ENCODE measurements at regions of chr19 and their contacts with region 1.

Region 1: GRCh38 chr19:49676690-49677231 is 310 bp upstream of the PRMT1 start:
- DNase-seq: peak; percentile 91 to 100 (median 98)
- ATAC-seq: peak; percentile 74 to 76
- H3K4me3 Mint-ChIP-seq: peak overlapping the region; percentile 89 to 100 (median 98)
- H3K27ac Mint-ChIP-seq: peak overlapping the region; percentile 84 to 100 (median 98)
- H3K4me1 Mint-ChIP-seq: peaks cover 32 to 55% (median 44%) of the 10 kb centered on the region in 4 donors
- H3K27me3 Mint-ChIP-seq: no peaks in the 10 kb centered on the region

Region 2: DNA sequence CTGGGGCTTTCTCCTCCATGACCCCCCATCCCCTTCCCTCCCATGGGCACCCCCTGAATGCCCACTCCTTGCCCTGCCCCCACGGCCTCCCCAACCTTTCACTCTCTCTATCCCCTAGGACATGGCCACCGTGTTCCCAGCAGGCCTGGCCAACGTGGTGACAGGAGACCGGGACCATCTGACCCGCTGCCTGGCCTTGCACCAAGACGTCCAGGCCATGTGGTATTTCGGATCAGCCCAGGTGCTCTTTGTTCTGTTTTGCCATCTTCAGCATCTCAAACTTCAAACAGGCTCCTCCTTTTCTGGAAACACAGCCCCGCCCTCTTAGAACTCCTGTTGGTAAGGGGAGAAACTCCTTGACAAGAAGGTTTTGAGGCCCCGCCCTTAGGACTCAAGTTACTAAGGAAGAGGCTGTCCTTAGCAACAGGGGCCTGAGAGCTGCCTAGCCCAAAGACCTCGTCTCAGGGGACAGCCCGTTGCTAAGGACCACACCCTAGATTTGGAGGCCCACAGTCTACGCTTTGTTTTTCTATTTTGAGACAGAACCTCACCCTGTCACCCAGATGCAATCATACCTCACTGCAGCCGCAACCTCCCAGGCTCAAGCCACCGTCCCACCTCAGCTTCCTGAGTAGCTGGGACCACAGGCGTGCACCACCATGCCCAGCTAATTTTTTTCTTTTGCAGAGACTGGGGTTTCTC is 207.9 kb before region 1 on chr19:
- POLR2A ChIA-PET with region 1: interaction called, 11 read pairs
- DNase-seq: peak; percentile 58 to 98 (median 92)
- ATAC-seq: peak; percentile 74 to 83
- H3K4me3 Mint-ChIP-seq: peak overlapping the region; percentile 52 to 98 (median 84)
- H3K27ac Mint-ChIP-seq: peak overlapping the region; percentile 98 to 100 (median 100)
- H3K4me1 Mint-ChIP-seq: peaks cover 14 to 59% (median 48%) of the 10 kb centered on the region in 4 donors
- H3K27me3 Mint-ChIP-seq: no peaks in the 10 kb centered on the region

Region 3: DNA sequence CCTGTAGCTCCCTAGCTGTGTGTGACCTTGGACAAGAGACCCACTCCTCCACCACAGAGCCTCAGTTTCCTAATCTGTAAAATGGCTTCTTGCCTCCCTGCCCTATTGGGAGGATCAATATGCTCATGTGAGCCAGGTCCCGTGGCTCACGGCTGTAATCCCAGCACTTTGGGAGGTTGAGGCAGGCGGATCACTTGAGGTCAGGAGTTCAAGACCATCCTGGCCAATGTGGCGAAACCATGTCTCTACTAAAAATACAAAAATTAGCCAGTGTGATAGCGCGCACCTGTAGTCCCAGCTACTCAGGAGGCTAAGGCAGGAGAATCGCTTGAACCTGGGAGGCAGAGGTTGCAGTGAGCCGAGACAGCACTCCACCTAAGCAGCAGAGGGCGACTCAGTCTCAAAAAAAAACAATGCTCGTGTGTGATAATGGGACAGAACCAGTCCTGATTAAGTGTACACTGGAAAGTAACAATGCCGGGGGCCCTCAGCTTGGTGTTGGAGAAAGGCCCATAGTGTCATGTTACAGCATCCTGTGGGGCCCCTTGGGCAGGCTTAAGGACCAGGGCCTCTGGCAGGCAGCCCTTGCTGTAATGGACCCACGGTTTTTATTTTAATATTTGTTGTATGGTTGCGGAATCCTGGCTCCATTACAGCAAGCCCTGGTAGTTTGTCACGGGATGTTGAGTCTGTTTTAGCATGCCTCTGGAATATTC is 173.7 kb before region 1 on chr19:
- POLR2A ChIA-PET with region 1: interaction called, 15 read pairs
- DNase-seq: peak in 6 of 10 donors; percentile 43 to 75 (median 60)
- ATAC-seq: no peak
- H3K4me3 Mint-ChIP-seq: peak overlapping the region in 4 of 10 donors; percentile 18 to 34 (median 30)
- H3K27ac Mint-ChIP-seq: peak overlapping the region; percentile 96 to 100 (median 99)
- H3K4me1 Mint-ChIP-seq: peaks cover 15 to 58% (median 51%) of the 10 kb centered on the region in 4 donors
- H3K27me3 Mint-ChIP-seq: peaks cover 0 to 2% (median 0%) of the 10 kb centered on the region in 5 donors

Region 4: DNA sequence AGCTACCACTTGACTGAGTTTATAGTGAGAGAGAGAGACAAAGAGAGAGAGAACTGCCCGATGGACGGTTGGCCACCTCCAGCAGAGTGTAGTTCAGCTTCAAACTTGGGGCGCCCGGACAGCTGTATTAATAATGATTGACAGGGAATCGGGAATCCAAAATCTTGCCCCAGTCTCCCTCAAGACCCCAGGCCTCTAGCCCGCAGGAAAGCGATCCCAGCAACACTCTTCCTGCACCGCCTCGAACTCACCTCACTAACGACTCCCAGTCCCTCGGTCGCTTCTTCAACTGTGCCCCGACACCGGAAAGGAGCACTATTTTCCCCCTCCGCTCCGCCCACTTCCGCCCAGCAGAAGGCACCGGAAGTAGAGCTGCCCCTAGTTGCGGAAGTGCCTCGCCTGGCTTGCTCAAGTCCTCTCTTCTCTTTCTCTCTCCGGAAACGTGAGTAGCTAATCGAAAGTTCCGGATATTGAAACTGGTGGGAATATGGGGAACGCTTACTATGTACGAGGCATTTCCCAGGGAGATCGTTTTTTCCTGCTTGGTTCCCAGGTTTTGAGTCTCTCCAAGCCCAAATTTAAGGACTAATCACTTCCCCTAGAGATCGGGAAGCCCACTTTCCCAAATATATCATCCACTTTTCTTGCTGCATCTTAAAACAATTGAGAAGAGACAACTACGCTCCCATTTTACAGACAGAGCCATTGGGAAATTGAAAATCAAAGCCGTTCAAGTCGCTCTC is 96.3 kb before region 1 on chr19 and contains the start of gene NOSIP:
- POLR2A ChIA-PET with region 1: interaction called, 13 read pairs
- DNase-seq: peak; percentile 88 to 98 (median 96)
- ATAC-seq: peak; percentile 98 to 99
- H3K4me3 Mint-ChIP-seq: peak within 1 kb of the TSS; percentile 90 to 98 (median 94)
- H3K27ac Mint-ChIP-seq: peak within 1 kb of the TSS; percentile 89 to 97 (median 93)
- H3K4me1 Mint-ChIP-seq: peaks cover 14 to 44% (median 36%) of the 10 kb centered on the region in 4 donors
- H3K27me3 Mint-ChIP-seq: no peaks in the 10 kb centered on the region
- polyA plus RNA-seq, gene NOSIP: 662 to 854 (median 844) TPM

Region 5: GRCh38 chr19:49640113-49640898 is 36.5 kb before region 1 on chr19 and contains the start of gene RRAS:
- POLR2A ChIA-PET with region 1: interaction called, 63 read pairs
- DNase-seq: peak; percentile 94 to 100 (median 99)
- ATAC-seq: peak; percentile 67 to 73
- H3K4me3 Mint-ChIP-seq: peak within 1 kb of the TSS; percentile 87 to 98 (median 94)
- H3K27ac Mint-ChIP-seq: peak within 1 kb of the TSS; percentile 94 to 99 (median 97)
- H3K4me1 Mint-ChIP-seq: peaks cover 45 to 68% (median 58%) of the 10 kb centered on the region in 4 donors
- H3K27me3 Mint-ChIP-seq: no peaks in the 10 kb centered on the region
- polyA plus RNA-seq, gene RRAS: 21.8 to 30.2 (median 28.4) TPM

Region 6: DNA sequence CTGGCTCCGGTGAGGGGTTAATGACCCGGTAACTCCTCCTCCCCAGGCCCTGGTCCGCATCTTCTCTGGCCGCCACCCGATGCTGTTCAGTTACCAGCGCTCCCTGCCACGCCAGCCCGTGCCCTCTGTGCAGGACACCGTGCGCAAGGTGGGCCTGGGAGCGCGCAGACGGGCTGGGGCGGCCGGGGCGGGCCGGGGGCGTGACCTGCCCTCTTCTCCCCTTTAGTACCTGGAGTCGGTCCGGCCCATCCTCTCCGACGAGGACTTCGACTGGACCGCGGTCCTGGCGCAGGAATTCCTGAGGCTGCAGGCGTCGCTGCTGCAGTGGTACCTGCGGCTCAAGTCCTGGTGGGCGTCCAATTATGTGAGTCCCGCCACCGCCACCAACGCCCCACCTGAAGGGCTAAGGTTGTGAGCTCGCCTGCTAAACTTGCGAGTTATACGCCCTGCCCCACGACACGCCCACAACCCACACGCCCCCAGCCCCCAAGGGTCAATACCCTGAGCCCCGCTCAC is 24.6 kb after region 1 on chr19:
- POLR2A ChIA-PET with region 1: no interaction called
- DNase-seq: no peak
- ATAC-seq: no peak
- H3K4me3 Mint-ChIP-seq: no peak overlapping the region
- H3K27ac Mint-ChIP-seq: no peak overlapping the region
- H3K4me1 Mint-ChIP-seq: peaks cover 0 to 1% (median 0%) of the 10 kb centered on the region in 4 donors
- H3K27me3 Mint-ChIP-seq: peaks cover 0 to 35% (median 2%) of the 10 kb centered on the region in 5 donors

Region 7: GRCh38 chr19:49718511-49718910 is 41.8 kb after region 1 on chr19:
- POLR2A ChIA-PET with region 1: interaction called, 14 read pairs
- DNase-seq: no peak
- ATAC-seq: no peak
- H3K4me3 Mint-ChIP-seq: peak overlapping the region; percentile 52 to 97 (median 80)
- H3K27ac Mint-ChIP-seq: peak overlapping the region; percentile 60 to 100 (median 98)
- H3K4me1 Mint-ChIP-seq: peaks cover 6 to 32% (median 10%) of the 10 kb centered on the region in 4 donors
- H3K27me3 Mint-ChIP-seq: no peaks in the 10 kb centered on the region

Region 8: DNA sequence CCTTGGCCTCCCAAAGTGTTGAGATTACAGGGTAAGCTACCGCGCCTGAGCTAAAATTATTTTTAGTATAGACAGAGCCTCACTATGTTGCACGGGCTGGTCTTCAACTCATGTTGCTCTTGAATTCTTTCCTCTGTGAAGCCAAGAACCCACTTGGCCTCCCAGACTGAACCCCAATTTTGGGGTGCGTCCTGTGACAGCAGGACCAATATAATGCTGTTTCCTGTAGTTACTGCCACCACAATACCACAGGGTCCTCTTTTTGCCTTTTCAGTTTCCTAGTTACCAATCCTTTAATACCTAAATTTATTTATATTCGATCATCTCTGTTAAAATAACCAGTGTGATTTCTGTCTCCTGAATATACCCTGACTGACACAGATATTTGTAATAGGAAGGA is 53.4 kb after region 1 on chr19:
- POLR2A ChIA-PET with region 1: no interaction called
- DNase-seq: no peak
- ATAC-seq: no peak
- H3K4me3 Mint-ChIP-seq: no peak overlapping the region
- H3K27ac Mint-ChIP-seq: no peak overlapping the region
- H3K4me1 Mint-ChIP-seq: no peaks in the 10 kb centered on the region
- H3K27me3 Mint-ChIP-seq: no peaks in the 10 kb centered on the region

Region 9: DNA sequence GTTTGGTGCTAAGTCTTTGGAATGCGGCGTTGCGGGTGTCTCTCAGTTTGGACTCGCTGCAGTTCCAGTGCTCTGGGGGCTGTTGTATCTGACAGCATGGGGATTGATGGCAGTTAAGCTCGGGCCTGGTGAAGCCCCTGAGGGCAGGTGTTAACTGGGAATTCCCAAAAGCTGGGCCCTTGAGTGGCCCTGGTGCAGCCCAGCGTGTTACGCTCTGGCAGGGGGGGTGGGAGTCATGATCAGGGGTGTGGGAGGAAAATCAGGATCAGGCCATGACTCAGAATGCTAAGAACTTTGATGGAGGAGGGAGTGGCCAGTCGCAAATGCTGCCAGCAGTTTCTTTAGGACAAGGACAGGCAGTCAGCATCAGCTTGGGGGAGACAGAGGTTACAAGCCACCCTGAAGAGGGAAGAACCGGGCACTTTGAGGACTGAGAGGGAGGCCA is 109.6 kb after region 1 on chr19:
- POLR2A ChIA-PET with region 1: no interaction called
- DNase-seq: no peak
- ATAC-seq: no peak
- H3K4me3 Mint-ChIP-seq: no peak overlapping the region
- H3K27ac Mint-ChIP-seq: peak overlapping the region in 2 of 10 donors; percentile 61 to 73
- H3K4me1 Mint-ChIP-seq: peaks cover 0 to 18% (median 8%) of the 10 kb centered on the region in 4 donors
- H3K27me3 Mint-ChIP-seq: no peaks in the 10 kb centered on the region

Measured in naive thymus-derived CD8-positive, alpha-beta T cell (primary cell).